H1 (cell line): ENCODE measurements at regions of chr16 and their contacts with region 1.

Region 1: DNA sequence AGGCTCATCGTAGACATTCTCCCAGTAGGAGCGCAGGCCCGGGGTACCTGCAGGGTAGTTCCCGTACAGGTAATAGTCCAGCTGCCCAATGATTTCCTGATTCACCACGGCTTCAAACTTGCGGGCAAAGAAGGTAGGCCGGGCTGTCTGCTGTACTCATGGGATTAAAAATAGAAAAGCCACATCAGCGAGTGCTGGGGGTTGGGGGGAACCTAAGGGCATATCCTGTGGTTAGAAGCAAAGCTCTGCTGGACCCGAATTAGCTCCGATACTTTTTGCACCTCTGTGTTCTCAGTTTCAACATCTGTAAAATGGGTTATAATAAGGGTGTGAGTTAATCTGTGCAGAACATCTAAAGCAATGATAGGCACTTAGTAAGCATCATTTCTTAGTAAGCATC is 336.2 kb downstream of the XYLT1 start:
- DNase-seq: no peak
- H3K4me3 ChIP-seq: no peak overlapping the region
- H3K27ac ChIP-seq: no peak overlapping the region
- H3K4me1 ChIP-seq: peaks cover 0 to 4% (median 2%) of the 10 kb centered on the region in 4 experiments; a peak in 3 of 7 replicates
- H3K27me3 ChIP-seq: no peaks in the 10 kb centered on the region
- CTCF ChIP-seq: no peak
- EP300 ChIP-seq: no peak
- POLR2A ChIP-seq: no peak
- RAD21 ChIP-seq: no peak

Region 2: GRCh38 chr16:16817199-16817598 is 317.4 kb before region 1 on chr16:
- CTCF ChIA-PET with region 1: no interaction called
- POLR2A ChIA-PET with region 1: no interaction called
- DNase-seq: no peak
- H3K4me3 ChIP-seq: no peak overlapping the region
- H3K27ac ChIP-seq: no peak overlapping the region
- H3K4me1 ChIP-seq: no peaks in the 10 kb centered on the region
- H3K27me3 ChIP-seq: no peaks in the 10 kb centered on the region
- CTCF ChIP-seq: no peak
- EP300 ChIP-seq: no peak
- POLR2A ChIP-seq: no peak
- RAD21 ChIP-seq: no peak

Region 3: GRCh38 chr16:17072104-17072503 is 62.5 kb before region 1 on chr16:
- CTCF ChIA-PET with region 1: no interaction called
- POLR2A ChIA-PET with region 1: no interaction called
- DNase-seq: no peak
- H3K4me3 ChIP-seq: no peak overlapping the region
- H3K27ac ChIP-seq: no peak overlapping the region
- H3K4me1 ChIP-seq: peaks cover 0 to 2% (median 1%) of the 10 kb centered on the region in 4 experiments; a peak in 4 of 7 replicates
- H3K27me3 ChIP-seq: no peaks in the 10 kb centered on the region
- CTCF ChIP-seq: no peak
- EP300 ChIP-seq: no peak
- POLR2A ChIP-seq: no peak
- RAD21 ChIP-seq: no peak

Region 4: DNA sequence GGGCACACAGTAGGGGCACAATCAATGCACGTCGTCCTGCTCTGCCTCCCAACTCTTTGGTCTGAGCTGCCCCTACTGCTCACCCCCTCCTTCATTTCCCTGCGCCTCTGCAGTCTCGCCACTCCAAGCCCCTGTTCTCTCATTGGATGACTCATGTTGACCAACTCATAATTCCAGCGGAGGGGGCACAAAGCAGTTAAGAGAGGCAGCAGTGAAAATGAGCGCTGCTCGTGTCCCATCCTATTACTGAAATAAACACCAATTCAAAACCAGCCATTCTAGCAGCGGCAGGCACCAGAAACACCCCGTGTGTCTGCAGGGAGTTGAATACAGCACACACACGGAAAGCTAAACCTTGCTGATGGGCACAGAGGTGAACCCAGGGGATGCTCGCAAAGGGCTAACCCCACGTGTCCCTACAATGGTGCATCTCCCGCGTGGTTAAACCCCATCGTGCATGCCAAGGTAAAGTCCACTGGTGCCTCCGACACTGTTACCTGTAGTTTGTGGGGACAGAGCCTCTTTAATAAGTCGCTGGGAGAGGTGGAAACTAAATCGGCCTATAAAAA is 25.8 kb after region 1 on chr16:
- CTCF ChIA-PET with region 1: interaction called, 11 read pairs
- POLR2A ChIA-PET with region 1: no interaction called
- DNase-seq: peak in 1 of 2 experiments; percentile 50
- H3K4me3 ChIP-seq: peak overlapping the region in 1 of 4 experiments; percentile 34; a peak in 1 of 8 replicates
- H3K27ac ChIP-seq: no peak overlapping the region
- H3K4me1 ChIP-seq: peaks cover 7 to 16% (median 14%) of the 10 kb centered on the region in 4 experiments
- H3K27me3 ChIP-seq: no peaks in the 10 kb centered on the region
- CTCF ChIP-seq: no peak
- EP300 ChIP-seq: no peak
- POLR2A ChIP-seq: no peak
- RAD21 ChIP-seq: no peak